Right ventricle myocardium inferior (tissue), 1 donor: ENCODE measurements at regions of chr15 and their contacts with region 1.

Region 1: GRCh38 chr15:34241372-34242330 is 16.8 kb downstream of the EMC4 start:
- DNase-seq: no peak
- ATAC-seq: no peak

Region 2: GRCh38 chr15:34318277-34319079 is 76.8 kb after region 1 on chr15:
- intact Hi-C with region 1: no loop called
- DNase-seq: no peak
- ATAC-seq: peak; percentile 97

Region 3: GRCh38 chr15:34367101-34368081 is 125.7 kb after region 1 on chr15 and contains the start of gene LPCAT4:
- intact Hi-C with region 1: loop called (anchors 1 kb)
- DNase-seq: peak; percentile 96
- ATAC-seq: peak; percentile 96
- total RNA-seq, gene LPCAT4: 89.2 TPM

Region 4: GRCh38 chr15:34490417-34491193 is 249.0 kb after region 1 on chr15:
- intact Hi-C with region 1: no loop called
- DNase-seq: peak; percentile 62
- ATAC-seq: no peak